Natural killer cell (primary cell): ENCODE measurements at regions of chr10 and their contacts with region 1.

Region 1: DNA sequence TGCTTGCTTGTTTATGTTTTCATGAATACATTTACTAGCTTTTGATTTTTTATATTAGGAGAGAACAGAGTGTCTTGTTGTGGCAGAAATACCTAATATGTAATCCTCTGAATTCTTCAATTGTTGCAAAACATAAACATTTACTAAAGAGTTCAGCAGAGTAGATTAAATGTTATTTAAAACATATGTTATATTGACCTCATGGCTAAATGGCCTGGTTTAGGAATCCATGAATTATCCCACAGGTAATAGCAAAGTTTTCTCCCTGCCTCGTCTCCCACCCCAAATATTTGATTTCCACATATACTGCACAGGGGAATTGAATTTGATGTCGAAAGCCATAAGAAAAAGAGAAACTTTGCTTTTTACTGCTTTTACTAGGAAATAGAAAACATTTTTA is 111.8 kb downstream of the ADK start:
- DNase-seq: no peak
- ATAC-seq: no peak
- H3K4me3 ChIP-seq: no peak overlapping the region
- H3K4me3 Mint-ChIP-seq: no peak overlapping the region
- H3K27ac ChIP-seq: no peak overlapping the region
- H3K27ac Mint-ChIP-seq: no peak overlapping the region
- H3K4me1 ChIP-seq: peaks cover 4% of the 10 kb centered on the region
- H3K4me1 Mint-ChIP-seq: peaks cover 0 to 8% of the 10 kb centered on the region in 2 donors
- H3K27me3 ChIP-seq: no peaks in the 10 kb centered on the region
- H3K27me3 Mint-ChIP-seq: no peaks in the 10 kb centered on the region
- CTCF ChIP-seq: no peak

Region 2: GRCh38 chr10:74738985-74739567 is 476.2 kb after region 1 on chr10:
- intact Hi-C with region 1: loop called (anchors 10 kb)
- DNase-seq: peak; percentile 29 to 62
- ATAC-seq: peak; percentile 77 to 85 (median 83)
- H3K4me3 ChIP-seq: peak overlapping the region; percentile 32
- H3K4me3 Mint-ChIP-seq: peak overlapping the region; percentile 82
- H3K27ac ChIP-seq: peak overlapping the region; percentile 88
- H3K27ac Mint-ChIP-seq: peak overlapping the region; percentile 92 to 95
- H3K4me1 ChIP-seq: peaks cover 31% of the 10 kb centered on the region
- H3K4me1 Mint-ChIP-seq: peaks cover 30 to 34% of the 10 kb centered on the region in 2 donors
- H3K27me3 ChIP-seq: no peaks in the 10 kb centered on the region
- H3K27me3 Mint-ChIP-seq: no peaks in the 10 kb centered on the region
- CTCF ChIP-seq: peak; percentile 30